ENCODE measurements at regions of chr14 and their contacts with region 1.

Region 1: DNA sequence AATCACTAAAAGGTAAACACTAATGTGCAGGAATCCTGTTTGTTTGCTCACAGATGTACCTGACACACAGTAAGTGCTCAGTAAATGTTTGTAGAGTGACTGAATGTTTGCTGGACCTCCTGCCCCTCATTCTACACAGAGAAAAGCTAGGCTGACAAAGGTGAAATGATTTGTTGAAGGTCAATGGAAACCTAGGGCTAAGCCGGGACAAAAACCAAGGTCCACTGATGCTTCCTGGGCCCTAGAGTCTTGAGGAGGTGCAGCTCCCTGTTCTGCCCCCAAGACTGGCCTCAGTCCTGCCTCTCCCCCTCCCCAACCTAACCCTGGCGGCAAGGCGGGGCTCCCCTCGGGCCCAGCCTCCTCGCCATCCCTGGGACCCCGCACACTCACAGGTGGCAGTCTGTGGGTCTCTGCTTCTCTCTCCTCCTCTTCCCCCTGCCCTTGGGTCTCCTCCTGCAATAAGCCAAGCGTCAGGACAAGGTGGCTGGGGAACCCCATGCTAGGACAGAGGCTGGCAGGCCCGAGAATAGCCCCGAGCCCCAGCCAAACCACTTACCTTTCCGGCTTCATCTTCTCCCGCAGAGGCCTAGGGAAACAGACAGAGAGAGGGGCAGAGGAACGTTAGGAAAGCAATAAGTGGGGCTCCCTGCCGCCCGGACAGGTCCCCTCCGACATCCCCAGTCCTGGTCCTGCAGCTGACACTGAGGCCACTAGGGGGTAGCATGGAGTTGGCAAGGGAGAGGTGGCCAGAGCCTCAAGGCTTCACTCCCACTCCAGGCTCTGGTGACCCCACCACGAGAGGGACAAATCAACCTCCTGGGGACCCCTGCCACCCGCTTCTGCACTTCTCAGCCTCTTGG is 9.3 kb downstream of the PGF start:
- DNase-seq: peak; percentile 73 to 91
- H3K4me3 ChIP-seq: no peak overlapping the region
- H3K27ac ChIP-seq: no peak overlapping the region
- H3K4me1 ChIP-seq: peaks cover 9% of the 10 kb centered on the region; the same call in 1 of the 2 replicates
- H3K27me3 ChIP-seq: no peaks in the 10 kb centered on the region
- CTCF ChIP-seq: peak; percentile 99

Region 2: DNA sequence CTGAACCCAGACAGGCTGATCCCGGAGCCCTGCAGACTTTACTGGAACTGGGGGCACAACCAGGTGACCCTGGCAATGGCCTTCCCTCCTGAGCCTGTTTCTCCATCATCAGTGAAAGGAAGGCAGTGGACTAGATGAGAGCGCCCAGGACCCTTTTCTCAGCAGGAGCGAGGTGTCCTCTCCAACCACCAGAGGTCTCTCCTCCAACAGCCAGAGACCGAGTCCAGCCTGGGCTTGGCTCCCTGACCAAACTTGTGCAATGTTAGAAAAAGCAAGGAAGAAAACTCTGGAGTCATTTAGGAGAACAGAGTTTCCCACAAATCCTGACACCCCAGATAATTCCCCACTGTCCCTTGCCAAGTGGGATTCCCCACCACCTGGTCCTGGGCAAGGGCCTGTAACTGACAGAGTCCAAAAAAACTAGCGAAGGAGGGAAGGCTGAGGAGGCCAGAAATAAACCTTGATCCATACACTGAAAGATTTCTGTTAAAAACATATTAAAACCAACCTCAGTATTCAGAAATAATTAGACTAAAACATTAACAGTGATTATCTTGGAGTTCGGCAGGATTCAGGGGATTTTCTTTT is 32.0 kb before region 1 on chr14:
- CTCF ChIA-PET with region 1: no interaction called
- POLR2A ChIA-PET with region 1: no interaction called
- intact Hi-C with region 1: loop called (anchors 1 kb)
- DNase-seq: peak; percentile 73 to 82
- H3K4me3 ChIP-seq: no peak overlapping the region
- H3K27ac ChIP-seq: no peak overlapping the region
- H3K4me1 ChIP-seq: peaks cover 8% of the 10 kb centered on the region
- H3K27me3 ChIP-seq: no peaks in the 10 kb centered on the region
- CTCF ChIP-seq: peak; percentile 88

Region 3: GRCh38 chr14:75002392-75003249 is 56.6 kb after region 1 on chr14 and contains the start of gene EIF2B2:
- CTCF ChIA-PET with region 1: interaction called, 4 read pairs
- POLR2A ChIA-PET with region 1: interaction called, 5 read pairs
- intact Hi-C with region 1: loop called (anchors 1 kb)
- DNase-seq: peak; percentile 97 to 100
- H3K4me3 ChIP-seq: peak within 1 kb of the TSS; percentile 79
- H3K27ac ChIP-seq: 0 out of 2 replicates have a peak within 1 kb of the TSS, but pooled peaks have one; percentile 10
- H3K4me1 ChIP-seq: peaks cover 24% of the 10 kb centered on the region
- H3K27me3 ChIP-seq: no peaks in the 10 kb centered on the region
- CTCF ChIP-seq: peak; percentile 22; the same call in 1 of the 2 replicates
- total RNA-seq, gene EIF2B2: 131 and 139 TPM in 2 replicates

Region 4: GRCh38 chr14:75069045-75069810 is 123.2 kb after region 1 on chr14 and contains the start of gene ZC2HC1C:
- CTCF ChIA-PET with region 1: interaction called, 4 read pairs
- POLR2A ChIA-PET with region 1: no interaction called
- intact Hi-C with region 1: loop called (anchors 2 kb)
- DNase-seq: peak; percentile 94 to 100
- H3K4me3 ChIP-seq: peak within 1 kb of the TSS; percentile 71
- H3K27ac ChIP-seq: peak within 1 kb of the TSS; percentile 79
- H3K4me1 ChIP-seq: peaks cover 32% of the 10 kb centered on the region
- H3K27me3 ChIP-seq: no peaks in the 10 kb centered on the region
- CTCF ChIP-seq: no peak
- total RNA-seq, gene ZC2HC1C: 11.9 and 13.8 TPM in 2 replicates

Region 5: GRCh38 chr14:75842551-75842950 is 896.5 kb after region 1 on chr14:
- CTCF ChIA-PET with region 1: interaction called, 10 read pairs
- POLR2A ChIA-PET with region 1: no interaction called
- intact Hi-C with region 1: no loop called
- DNase-seq: no peak
- H3K4me3 ChIP-seq: no peak overlapping the region
- H3K27ac ChIP-seq: no peak overlapping the region
- H3K4me1 ChIP-seq: peaks cover 14% of the 10 kb centered on the region
- H3K27me3 ChIP-seq: no peaks in the 10 kb centered on the region
- CTCF ChIP-seq: no peak